T-cell (primary cell): ENCODE measurements at regions of chr3 and their contacts with region 1.

Region 1: GRCh38 chr3:16357186-16358147 is 92.5 kb downstream of the OXNAD1 start:
- DNase-seq: no peak
- ATAC-seq: no peak
- H3K4me3 ChIP-seq: no peak overlapping the region
- H3K4me3 Mint-ChIP-seq: no peak overlapping the region
- H3K27ac ChIP-seq: no peak overlapping the region
- H3K27ac Mint-ChIP-seq: peak overlapping the region; percentile 33 to 45
- H3K4me1 ChIP-seq: no peaks in the 10 kb centered on the region
- H3K4me1 Mint-ChIP-seq: peaks cover 24 to 50% (median 48%) of the 10 kb centered on the region in 3 donors
- H3K27me3 ChIP-seq: no peaks in the 10 kb centered on the region
- H3K27me3 Mint-ChIP-seq: no peaks in the 10 kb centered on the region

Region 2: DNA sequence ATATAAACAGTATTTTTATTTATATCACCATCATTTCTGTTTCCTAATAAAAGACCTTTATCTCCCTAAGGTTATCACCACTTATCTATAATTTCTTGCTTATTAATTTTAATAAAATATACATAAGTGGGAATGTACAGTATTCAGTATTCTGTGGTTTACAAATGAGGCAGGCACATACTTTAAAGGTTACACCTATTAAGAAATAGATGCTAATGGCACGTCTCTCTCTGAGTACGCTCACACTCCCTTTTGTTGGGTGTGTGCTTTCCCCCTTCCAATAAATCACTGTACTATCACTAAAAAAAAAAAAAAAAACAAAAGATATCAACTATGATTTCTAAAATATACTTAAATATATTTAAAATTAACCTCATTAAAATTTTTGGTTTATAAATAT is 83.6 kb before region 1 on chr3:
- CTCF ChIA-PET with region 1: interaction called in 1 of 2 experiments, 13 read pairs
- POLR2A ChIA-PET with region 1: no interaction called
- DNase-seq: no peak
- ATAC-seq: no peak
- H3K4me3 ChIP-seq: no peak overlapping the region
- H3K4me3 Mint-ChIP-seq: no peak overlapping the region
- H3K27ac ChIP-seq: no peak overlapping the region
- H3K27ac Mint-ChIP-seq: no peak overlapping the region
- H3K4me1 ChIP-seq: no peaks in the 10 kb centered on the region
- H3K4me1 Mint-ChIP-seq: peaks cover 0 to 1% (median under 1%) of the 10 kb centered on the region in 3 donors
- H3K27me3 ChIP-seq: no peaks in the 10 kb centered on the region
- H3K27me3 Mint-ChIP-seq: no peaks in the 10 kb centered on the region

Region 3: GRCh38 chr3:16369276-16369675 is 11.8 kb after region 1 on chr3:
- CTCF ChIA-PET with region 1: no interaction called
- POLR2A ChIA-PET with region 1: interaction called in 1 of 2 experiments, 15 read pairs
- DNase-seq: no peak
- ATAC-seq: no peak
- H3K4me3 ChIP-seq: no peak overlapping the region
- H3K4me3 Mint-ChIP-seq: no peak overlapping the region
- H3K27ac ChIP-seq: no peak overlapping the region
- H3K27ac Mint-ChIP-seq: peak overlapping the region in 1 of 2 donors; percentile 11
- H3K4me1 ChIP-seq: peaks cover 9 to 22% of the 10 kb centered on the region in 2 experiments
- H3K4me1 Mint-ChIP-seq: peaks cover 52 to 75% (median 65%) of the 10 kb centered on the region in 3 donors
- H3K27me3 ChIP-seq: no peaks in the 10 kb centered on the region
- H3K27me3 Mint-ChIP-seq: no peaks in the 10 kb centered on the region